ENCODE measurements at regions of chr10 and their contacts with region 1.

Region 1: DNA sequence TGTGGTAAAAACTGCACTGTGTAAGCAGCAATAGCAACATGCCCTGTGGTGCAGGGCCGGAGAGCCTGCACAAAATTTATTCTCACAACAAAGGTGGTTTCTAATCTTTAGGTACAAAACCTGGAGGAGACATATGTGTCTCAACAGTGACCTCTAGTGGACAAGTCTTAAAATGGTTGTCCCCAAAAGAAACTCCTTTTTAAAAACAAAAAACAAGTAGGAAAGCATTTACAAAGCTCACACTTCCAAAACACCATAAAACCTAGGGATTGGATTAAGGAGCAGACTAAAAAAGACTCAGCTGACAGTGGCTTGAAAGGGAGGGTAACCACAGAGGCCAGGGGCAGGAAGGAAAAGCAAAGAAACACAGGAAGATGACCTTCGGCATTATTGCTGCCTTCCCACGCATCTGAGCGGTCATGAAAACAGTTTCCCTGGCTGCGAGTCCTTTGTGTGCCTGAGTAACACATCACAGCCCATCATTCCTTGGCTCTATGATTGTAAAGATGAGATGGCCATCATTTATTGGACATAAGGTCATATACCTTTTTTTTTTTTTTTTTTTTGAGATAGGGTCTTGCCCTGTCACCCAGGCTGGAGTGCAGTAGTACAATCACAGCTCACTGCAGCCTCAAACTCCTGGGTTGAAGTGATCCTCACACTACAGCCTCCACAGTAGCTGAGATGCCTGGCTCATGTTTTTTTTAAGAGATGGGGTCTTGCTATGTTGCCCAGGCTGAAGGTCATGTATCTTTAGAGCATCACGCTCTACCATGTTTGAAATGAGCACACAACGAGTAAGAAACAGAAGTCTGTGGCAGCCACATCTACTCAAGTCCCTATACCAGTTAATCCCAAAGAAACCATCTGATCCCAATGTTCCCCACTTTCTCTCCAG is 39.5 kb downstream of the RSU1 start:
- DNase-seq: peak; percentile 52
- ATAC-seq: peak; percentile 68 to 79

Region 2: GRCh38 chr10:16116404-16117304 is 661.1 kb before region 1 on chr10:
- intact Hi-C with region 1: loop called in 1 of 2 experiments (anchors 5 kb)
- DNase-seq: no peak
- ATAC-seq: no peak